Activated CD4-positive, alpha-beta T cell treated with anti-CD3 and anti-CD28 coated beads for 36 hours (primary cell): ENCODE measurements at regions of chr20 and their contacts with region 1.

Region 1: DNA sequence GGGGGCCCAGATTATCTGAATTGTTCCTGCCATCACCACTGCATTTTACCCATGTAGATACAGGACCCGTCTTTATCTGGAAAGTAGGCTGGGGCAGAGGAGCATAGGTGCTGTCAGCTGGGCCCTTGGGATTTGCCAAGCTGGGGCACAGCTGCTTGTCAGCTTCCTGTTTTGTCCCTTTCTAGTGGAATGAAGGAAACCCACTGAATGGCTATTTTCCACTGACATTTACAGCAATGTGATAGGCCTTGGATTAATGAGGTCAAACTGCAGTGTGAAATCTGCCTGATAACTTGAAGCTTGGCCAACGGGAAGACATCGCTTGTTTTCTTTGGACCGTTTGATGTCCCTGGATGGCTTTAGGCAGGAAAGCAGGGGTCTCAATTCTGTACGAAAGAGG is 6.7 kb downstream of the PPP1R16B start:
- DNase-seq: no peak
- ATAC-seq: no peak
- H3K4me3 Mint-ChIP-seq: no peak overlapping the region
- H3K27ac Mint-ChIP-seq: peak overlapping the region; percentile 55
- H3K4me1 Mint-ChIP-seq: peaks cover 86% of the 10 kb centered on the region
- H3K27me3 Mint-ChIP-seq: no peaks in the 10 kb centered on the region

Region 2: GRCh38 chr20:38825901-38826625 is 13.9 kb after region 1 on chr20:
- CTCF ChIA-PET with region 1: interaction called, 4 read pairs
- POLR2A ChIA-PET with region 1: no interaction called
- intact Hi-C with region 1: loop called in 1 of 2 experiments (anchors 2 kb)
- DNase-seq: no peak
- ATAC-seq: no peak
- H3K4me3 Mint-ChIP-seq: no peak overlapping the region
- H3K27ac Mint-ChIP-seq: peak overlapping the region; percentile 29
- H3K4me1 Mint-ChIP-seq: peaks cover 94% of the 10 kb centered on the region
- H3K27me3 Mint-ChIP-seq: no peaks in the 10 kb centered on the region

Region 3: GRCh38 chr20:38970302-38970701 is 158.1 kb after region 1 on chr20:
- CTCF ChIA-PET with region 1: no interaction called
- POLR2A ChIA-PET with region 1: no interaction called
- intact Hi-C with region 1: no loop called
- DNase-seq: no peak
- ATAC-seq: peak; percentile 33
- H3K4me3 Mint-ChIP-seq: no peak overlapping the region
- H3K27ac Mint-ChIP-seq: no peak overlapping the region
- H3K4me1 Mint-ChIP-seq: peaks cover 4% of the 10 kb centered on the region
- H3K27me3 Mint-ChIP-seq: no peaks in the 10 kb centered on the region